RWPE1 (cell line): ENCODE measurements at regions of chr9 and their contacts with region 1.

Region 1: DNA sequence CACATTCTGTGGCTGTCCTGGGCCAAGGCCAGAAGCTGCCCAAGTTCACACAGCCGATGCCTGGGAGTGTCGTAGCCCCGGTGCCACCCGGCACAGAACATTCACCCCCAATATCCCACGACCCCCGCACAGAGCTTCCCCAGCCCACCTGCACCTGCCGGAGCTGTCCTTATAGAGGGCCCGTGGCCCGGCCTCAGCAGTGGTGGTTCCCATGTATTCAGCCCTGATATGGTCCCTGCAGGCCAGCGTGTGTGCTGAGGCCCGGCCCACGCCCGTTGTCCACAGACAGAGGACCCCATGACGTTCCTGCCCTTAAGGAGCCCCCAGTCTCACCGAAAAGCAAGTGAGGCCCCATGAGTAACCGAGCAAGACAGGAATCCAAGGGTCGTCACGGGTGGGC is 5.3 kb upstream of the GFI1B start:
- DNase-seq: no peak
- H3K27ac ChIP-seq: no peak overlapping the region
- CTCF ChIP-seq: no peak

Region 2: GRCh38 chr9:132609184-132609583 is 364.0 kb before region 1 on chr9:
- CTCF ChIA-PET with region 1: interaction called, 12 read pairs
- POLR2A ChIA-PET with region 1: no interaction called
- DNase-seq: no peak
- H3K27ac ChIP-seq: no peak overlapping the region
- CTCF ChIP-seq: no peak

Region 3: DNA sequence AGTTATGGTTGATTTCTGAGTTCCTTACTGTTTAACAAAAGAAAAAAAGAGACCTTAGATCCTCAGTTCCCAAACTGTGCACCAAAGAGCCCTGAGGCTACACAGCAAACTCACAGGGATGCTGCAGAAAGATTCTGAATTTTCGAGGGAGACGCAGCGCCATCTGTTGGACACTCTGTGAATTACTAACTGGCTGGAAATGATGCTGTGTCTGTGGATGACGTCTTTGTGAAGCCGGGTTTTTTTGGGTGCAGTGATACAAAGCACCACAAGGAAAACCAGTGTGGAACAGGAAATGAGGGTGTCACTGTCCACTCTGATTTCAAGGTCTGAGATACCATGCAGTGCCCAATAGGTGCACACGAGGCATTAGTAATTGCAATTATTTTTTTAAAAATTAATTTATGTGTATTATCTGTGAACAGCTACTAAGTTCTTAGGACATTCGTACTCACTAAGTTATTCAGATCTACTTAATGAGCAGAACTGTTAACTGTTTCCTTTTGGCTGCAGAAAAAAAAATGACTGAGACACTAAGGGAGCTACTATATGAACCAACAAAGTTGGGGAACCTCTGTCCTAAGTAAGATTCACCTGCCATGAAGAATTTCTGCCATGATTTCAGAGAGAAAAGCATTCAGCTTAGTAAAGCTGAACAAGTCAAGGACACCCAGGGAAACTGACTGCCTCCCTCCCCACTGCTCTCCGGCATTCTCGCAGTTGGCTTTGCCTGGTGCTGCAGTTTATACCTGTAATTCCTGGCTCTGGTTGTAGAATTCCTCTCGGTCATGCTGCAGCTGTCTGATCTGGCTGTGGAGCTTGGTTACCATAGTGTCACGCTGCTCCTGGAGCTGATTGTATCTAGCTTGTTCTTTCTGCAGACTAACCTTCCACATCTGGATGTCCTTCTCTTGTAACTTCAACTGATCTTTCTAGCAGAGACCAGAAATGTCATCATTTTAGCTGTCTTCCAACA is 71.0 kb before region 1 on chr9:
- CTCF ChIA-PET with region 1: interaction called, 16 read pairs
- POLR2A ChIA-PET with region 1: no interaction called
- DNase-seq: peak; percentile 95
- H3K27ac ChIP-seq: no peak overlapping the region
- CTCF ChIP-seq: peak; percentile 99

Region 4: GRCh38 chr9:133048569-133048968 is 75.4 kb after region 1 on chr9:
- CTCF ChIA-PET with region 1: no interaction called
- POLR2A ChIA-PET with region 1: no interaction called
- DNase-seq: peak; percentile 64
- H3K27ac ChIP-seq: peak overlapping the region; percentile 43
- CTCF ChIP-seq: peak; percentile 72